Ascending aorta (tissue), 2 donors: ENCODE measurements at regions of chr2 and their contacts with region 1.

Region 1: DNA sequence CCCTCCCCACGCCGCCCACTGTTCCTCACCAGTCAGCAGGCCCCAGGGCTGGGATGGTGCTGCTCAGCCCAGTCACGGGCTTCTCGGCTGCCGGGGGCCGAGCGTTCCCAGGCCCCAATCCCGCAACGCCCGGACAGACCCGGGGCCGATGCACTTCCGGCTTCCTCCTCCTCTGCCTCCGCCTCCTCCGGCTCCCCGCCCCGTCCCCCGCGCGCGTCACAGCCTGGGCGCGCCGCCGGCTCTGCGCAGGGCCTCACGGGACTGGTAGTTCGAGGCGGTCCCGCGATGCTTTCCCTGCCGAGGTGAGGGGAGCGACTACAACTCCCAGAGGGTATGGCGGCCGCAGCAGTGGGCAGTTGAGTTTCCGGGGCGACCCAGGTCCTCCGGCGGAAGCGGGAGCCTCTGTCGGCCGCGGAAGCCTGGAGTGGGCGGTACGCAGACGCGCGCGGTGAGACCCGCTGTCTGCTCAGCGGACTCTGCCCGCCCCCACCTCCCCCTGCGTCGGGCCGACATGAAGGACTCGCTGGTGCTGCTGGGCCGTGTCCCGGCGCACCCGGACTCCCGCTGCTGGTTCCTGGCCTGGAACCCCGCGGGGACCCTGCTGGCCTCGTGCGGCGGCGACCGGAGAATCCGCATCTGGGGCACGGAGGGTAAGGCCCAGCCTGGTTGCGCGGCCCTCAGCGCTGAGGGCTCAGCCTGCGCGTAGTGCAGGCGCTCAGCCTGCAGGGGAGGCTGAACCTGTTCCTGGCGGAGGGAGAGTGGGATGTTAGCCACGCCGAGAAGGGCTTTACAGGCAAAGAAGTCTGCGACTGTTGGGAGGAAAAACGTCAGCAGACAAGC is at the starts of genes CIAO1 and TMEM127:
- DNase-seq: peak; percentile 95 to 99
- H3K4me3 ChIP-seq: peak within 1 kb of the TSS; percentile 81 to 84
- H3K27ac ChIP-seq: peak within 1 kb of the TSS; percentile 94
- H3K4me1 ChIP-seq: peaks cover 15 to 38% of the 10 kb centered on the region in 2 donors
- H3K27me3 ChIP-seq: no peaks in the 10 kb centered on the region
- CTCF ChIP-seq: peak; percentile 20 to 57 (median 24)
- total RNA-seq, gene CIAO1: 127 TPM
- total RNA-seq, gene TMEM127: 61.9 TPM

Region 2: GRCh38 chr2:94964193-94964592 is 1301.9 kb before region 1 on chr2:
- intact Hi-C with region 1: no loop called
- DNase-seq: no peak
- H3K4me3 ChIP-seq: no peak overlapping the region
- H3K27ac ChIP-seq: no peak overlapping the region
- H3K4me1 ChIP-seq: no peaks in the 10 kb centered on the region
- H3K27me3 ChIP-seq: no peaks in the 10 kb centered on the region
- CTCF ChIP-seq: no peak

Region 3: DNA sequence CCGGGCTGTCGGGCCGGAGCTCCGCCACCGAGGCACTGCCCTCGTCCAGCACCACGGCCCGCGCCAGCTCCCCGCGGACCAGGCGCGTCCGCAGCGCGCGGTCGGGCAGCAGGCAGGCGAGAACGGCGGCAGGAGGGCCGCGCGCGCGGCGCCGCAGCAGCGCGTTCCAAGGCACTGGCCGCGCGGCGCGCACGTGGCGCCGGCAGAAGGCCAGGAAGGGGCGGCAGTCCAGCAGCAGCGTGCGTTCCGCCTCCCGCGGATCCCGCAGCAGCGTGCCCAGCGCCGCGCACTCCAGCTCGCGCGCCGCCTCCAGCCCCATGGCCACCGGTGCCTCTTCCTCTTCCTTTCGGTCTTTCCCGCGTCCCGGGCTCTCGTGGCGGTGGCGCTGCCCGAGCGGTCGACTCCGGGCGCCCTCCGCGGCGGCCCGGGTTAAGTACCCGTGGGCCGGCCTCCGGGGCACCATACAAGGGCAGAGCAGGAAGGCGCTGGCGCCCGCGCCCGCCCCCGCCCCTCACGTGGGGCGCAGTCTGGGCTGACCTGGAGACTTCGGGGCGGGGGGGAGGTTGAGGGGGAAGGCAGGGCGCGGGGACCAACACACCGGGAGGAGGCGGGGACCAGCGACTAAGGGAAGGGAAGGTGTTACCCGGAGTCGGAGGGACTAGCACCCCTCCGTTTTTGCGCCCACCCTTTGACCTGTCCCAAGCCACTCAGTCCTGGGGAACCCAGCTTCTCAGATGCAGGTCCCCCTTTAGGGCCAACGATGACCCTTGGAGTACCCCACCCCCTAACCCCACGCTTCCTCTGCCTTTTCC is 120.8 kb before region 1 on chr2 and contains the start of gene DUSP2:
- intact Hi-C with region 1: loop called (anchors 2 kb)
- DNase-seq: peak; percentile 82 to 89
- H3K4me3 ChIP-seq: peak within 1 kb of the TSS; percentile 76 to 78
- H3K27ac ChIP-seq: peak within 1 kb of the TSS; percentile 78 to 83
- H3K4me1 ChIP-seq: peaks cover 16 to 30% of the 10 kb centered on the region in 2 donors
- H3K27me3 ChIP-seq: no peaks in the 10 kb centered on the region
- CTCF ChIP-seq: peak in 2 of 3 experiments; percentile 10 to 18
- total RNA-seq, gene DUSP2: 7.2 TPM

Region 4: GRCh38 chr2:96197546-96198255 is 68.4 kb before region 1 on chr2:
- intact Hi-C with region 1: no loop called
- DNase-seq: no peak
- H3K4me3 ChIP-seq: no peak overlapping the region
- H3K27ac ChIP-seq: no peak overlapping the region
- H3K4me1 ChIP-seq: peaks cover 3 to 4% of the 10 kb centered on the region in 2 donors
- H3K27me3 ChIP-seq: no peaks in the 10 kb centered on the region
- CTCF ChIP-seq: no peak

Region 5: GRCh38 chr2:96208143-96209010 is 57.7 kb before region 1 on chr2 and contains the start of gene STARD7:
- intact Hi-C with region 1: loop called (anchors 1 kb)
- DNase-seq: peak; percentile 93 to 99
- H3K4me3 ChIP-seq: peak within 1 kb of the TSS; percentile 92 to 99
- H3K27ac ChIP-seq: peak within 1 kb of the TSS; percentile 92 to 97
- H3K4me1 ChIP-seq: peaks cover 12 to 39% of the 10 kb centered on the region in 2 donors
- H3K27me3 ChIP-seq: no peaks in the 10 kb centered on the region
- CTCF ChIP-seq: peak in 1 of 3 experiments; percentile 3
- total RNA-seq, gene STARD7: 85.6 TPM

Region 6: GRCh38 chr2:96305091-96305978 is 39.3 kb after region 1 on chr2 and contains the start of gene SNRNP200:
- intact Hi-C with region 1: loop called (anchors 1 kb)
- DNase-seq: peak; percentile 30 to 91
- H3K4me3 ChIP-seq: peak within 1 kb of the TSS; percentile 84 to 85
- H3K27ac ChIP-seq: peak within 1 kb of the TSS; percentile 73 to 82
- H3K4me1 ChIP-seq: peaks cover 4 to 13% of the 10 kb centered on the region in 2 donors
- H3K27me3 ChIP-seq: no peaks in the 10 kb centered on the region
- CTCF ChIP-seq: no peak
- total RNA-seq, gene SNRNP200: 57.4 TPM

Region 7: GRCh38 chr2:96320728-96321622 is 54.9 kb after region 1 on chr2:
- intact Hi-C with region 1: no loop called
- DNase-seq: peak in 1 of 2 donors; percentile 62
- H3K4me3 ChIP-seq: peak overlapping the region; percentile 57 to 67
- H3K27ac ChIP-seq: no peak overlapping the region
- H3K4me1 ChIP-seq: peaks cover 0 to 10% of the 10 kb centered on the region in 2 donors
- H3K27me3 ChIP-seq: no peaks in the 10 kb centered on the region
- CTCF ChIP-seq: no peak

Region 8: GRCh38 chr2:96868555-96869280 is 602.7 kb after region 1 on chr2:
- intact Hi-C with region 1: loop called (anchors 10 kb)
- DNase-seq: peak; percentile 73 to 95
- H3K4me3 ChIP-seq: peak overlapping the region; percentile 88 to 98
- H3K27ac ChIP-seq: peak overlapping the region; percentile 96 to 99
- H3K4me1 ChIP-seq: peaks cover 18 to 38% of the 10 kb centered on the region in 2 donors
- H3K27me3 ChIP-seq: no peaks in the 10 kb centered on the region
- CTCF ChIP-seq: peak; percentile 51 to 66 (median 62)

Region 9: DNA sequence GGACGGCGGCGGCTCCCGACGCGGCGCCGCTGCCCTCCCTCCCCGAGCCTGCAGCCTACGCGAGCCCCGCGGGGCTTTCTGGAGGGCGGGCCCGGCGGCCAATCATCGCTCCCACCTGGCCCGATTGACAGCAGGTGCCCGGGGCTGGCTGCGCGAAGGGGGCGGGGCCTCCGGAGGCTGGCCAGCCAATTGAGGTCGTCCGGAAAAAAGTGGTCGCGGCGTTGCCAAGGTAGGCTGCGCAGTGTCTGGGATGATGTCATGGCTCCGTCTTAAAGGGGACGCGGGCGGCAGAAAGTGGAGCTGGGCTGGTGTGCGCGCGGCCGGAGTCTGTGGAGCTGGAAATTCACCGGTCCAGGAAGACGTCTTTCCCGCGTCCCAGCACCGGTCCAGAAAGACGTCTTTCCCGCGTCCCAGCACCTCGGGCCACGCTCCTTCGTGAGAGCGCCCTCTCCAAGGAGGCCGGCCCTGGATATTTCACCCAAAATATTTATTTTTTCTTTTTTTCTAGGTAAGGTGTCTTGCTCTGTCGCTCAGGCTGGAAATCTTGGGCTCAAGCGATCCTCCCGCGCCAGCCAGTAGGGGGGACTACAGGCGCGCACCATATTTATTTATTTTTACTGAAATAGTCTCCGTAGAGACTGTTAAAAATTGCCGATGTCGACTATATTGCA is 1398.0 kb after region 1 on chr2 and contains the start of gene ACTR1B:
- intact Hi-C with region 1: loop called (anchors 10 kb)
- DNase-seq: peak; percentile 93 to 99
- H3K4me3 ChIP-seq: peak within 1 kb of the TSS; percentile 78 to 96
- H3K27ac ChIP-seq: peak within 1 kb of the TSS; percentile 94 to 95
- H3K4me1 ChIP-seq: peaks cover 13 to 24% of the 10 kb centered on the region in 2 donors
- H3K27me3 ChIP-seq: no peaks in the 10 kb centered on the region
- CTCF ChIP-seq: peak; percentile 57 to 68 (median 61)
- total RNA-seq, gene ACTR1B: 125 TPM